B cell (primary cell): ENCODE measurements at regions of chr2 and their contacts with region 1.

Region 1: DNA sequence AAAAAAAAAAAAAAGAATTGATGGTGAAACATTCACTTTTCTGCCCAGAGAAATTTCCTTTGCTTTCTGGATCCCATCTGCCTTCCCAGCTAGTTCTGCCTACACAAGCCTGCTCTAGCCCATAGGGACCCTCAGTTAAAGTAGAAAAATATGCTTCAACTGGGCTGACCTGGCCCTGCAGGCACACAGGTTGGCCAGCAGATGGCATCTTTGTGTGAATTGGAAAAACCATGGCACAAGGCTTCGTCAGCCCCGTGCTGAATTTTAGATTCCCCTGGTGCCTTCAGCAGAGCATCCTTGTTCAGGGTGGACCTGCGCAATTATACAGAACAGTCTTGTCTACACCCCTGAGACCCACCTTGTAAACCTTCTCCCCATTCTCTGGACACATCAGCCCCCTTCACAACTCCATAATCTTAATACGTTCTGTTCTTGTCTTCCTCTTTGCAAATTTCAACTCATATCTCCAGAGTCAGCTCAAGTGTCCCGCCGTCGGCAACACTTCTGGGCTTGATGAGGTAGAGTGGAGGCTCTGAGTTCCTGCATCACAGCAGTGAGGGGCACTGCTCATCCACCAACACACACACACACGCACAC is 114.5 kb downstream of the INSIG2 start:
- DNase-seq: peak; percentile 66
- ATAC-seq: peak; percentile 87
- H3K4me3 ChIP-seq: no peak overlapping the region
- H3K4me3 Mint-ChIP-seq: no peak overlapping the region
- H3K27ac ChIP-seq: no peak overlapping the region
- H3K27ac Mint-ChIP-seq: no peak overlapping the region
- H3K4me1 ChIP-seq: peaks cover 0 to 5% of the 10 kb centered on the region in 2 donors
- H3K4me1 Mint-ChIP-seq: peaks cover 4% of the 10 kb centered on the region
- H3K27me3 ChIP-seq: peaks cover 0 to 15% (median 6%) of the 10 kb centered on the region in 4 experiments
- H3K27me3 Mint-ChIP-seq: peaks cover 47% of the 10 kb centered on the region
- CTCF ChIP-seq: peak; percentile 91

Region 2: DNA sequence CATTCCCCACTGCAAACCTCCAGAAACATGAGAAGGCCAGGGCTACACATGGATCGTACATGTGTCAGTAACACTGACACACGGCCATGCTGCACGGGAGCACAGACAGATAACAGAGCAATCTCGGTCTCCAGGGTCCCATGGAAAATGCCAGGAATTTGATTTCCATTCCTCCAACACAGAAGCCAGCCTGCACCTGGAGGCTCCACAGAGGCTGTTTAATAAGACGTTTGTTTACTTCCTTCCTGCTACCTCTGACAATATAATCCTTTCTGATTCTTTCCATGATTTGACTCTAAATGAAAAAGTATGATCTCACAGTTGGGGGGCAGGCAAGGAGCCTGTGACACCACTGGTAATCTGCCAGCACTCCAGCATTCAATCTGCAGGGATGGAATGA is 599.2 kb before region 1 on chr2:
- CTCF ChIA-PET with region 1: no interaction called
- POLR2A ChIA-PET with region 1: no interaction called
- intact Hi-C with region 1: no loop called
- DNase-seq: no peak
- ATAC-seq: no peak
- H3K4me3 ChIP-seq: no peak overlapping the region
- H3K4me3 Mint-ChIP-seq: no peak overlapping the region
- H3K27ac ChIP-seq: no peak overlapping the region
- H3K27ac Mint-ChIP-seq: no peak overlapping the region
- H3K4me1 ChIP-seq: no peaks in the 10 kb centered on the region
- H3K4me1 Mint-ChIP-seq: no peaks in the 10 kb centered on the region
- H3K27me3 ChIP-seq: no peaks in the 10 kb centered on the region
- H3K27me3 Mint-ChIP-seq: no peaks in the 10 kb centered on the region
- CTCF ChIP-seq: no peak

Region 3: DNA sequence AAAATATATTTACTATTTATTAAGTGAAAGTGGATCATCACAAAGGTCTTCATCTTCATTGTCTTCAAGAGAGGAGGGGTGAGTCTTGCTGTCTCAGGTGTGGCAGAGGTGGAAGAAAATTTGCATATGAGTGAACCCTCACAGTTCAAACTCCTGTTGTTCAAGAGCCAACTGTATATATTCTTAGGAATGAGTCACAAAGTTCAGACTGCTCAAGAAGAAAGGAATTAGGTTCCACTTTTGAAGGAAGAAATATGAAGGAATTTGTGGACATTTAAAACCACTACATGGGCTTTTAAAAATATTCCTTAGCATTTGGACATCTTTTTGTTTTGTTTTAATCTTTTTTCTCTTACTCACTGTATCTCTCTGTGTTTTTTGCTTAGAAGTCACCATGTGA is 98.0 kb after region 1 on chr2:
- CTCF ChIA-PET with region 1: no interaction called
- POLR2A ChIA-PET with region 1: no interaction called
- intact Hi-C with region 1: no loop called
- DNase-seq: no peak
- ATAC-seq: no peak
- H3K4me3 ChIP-seq: no peak overlapping the region
- H3K4me3 Mint-ChIP-seq: no peak overlapping the region
- H3K27ac ChIP-seq: no peak overlapping the region
- H3K27ac Mint-ChIP-seq: no peak overlapping the region
- H3K4me1 ChIP-seq: no peaks in the 10 kb centered on the region
- H3K4me1 Mint-ChIP-seq: no peaks in the 10 kb centered on the region
- H3K27me3 ChIP-seq: peaks cover 0 to 4% (median 0%) of the 10 kb centered on the region in 4 experiments
- H3K27me3 Mint-ChIP-seq: peaks cover 28% of the 10 kb centered on the region
- CTCF ChIP-seq: no peak

Region 4: DNA sequence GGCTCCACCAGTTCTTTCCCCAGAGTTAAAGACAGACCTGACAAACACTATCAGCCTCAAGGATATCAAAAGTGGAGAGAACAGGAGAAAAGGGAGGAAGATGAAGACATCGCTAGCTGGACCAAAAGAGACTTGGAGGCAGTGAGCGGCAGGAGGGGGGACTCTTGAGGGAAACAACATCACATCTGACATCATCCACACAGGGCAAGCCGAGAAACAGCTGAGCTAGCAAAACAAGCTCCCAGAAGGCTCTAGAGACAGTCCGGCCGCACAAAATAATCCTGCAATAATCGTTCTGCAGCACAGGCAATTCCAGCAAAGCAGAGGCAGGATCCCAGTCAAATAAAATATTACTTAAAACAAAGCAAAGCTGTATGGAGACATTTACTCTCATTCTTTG is 404.8 kb after region 1 on chr2:
- CTCF ChIA-PET with region 1: no interaction called
- POLR2A ChIA-PET with region 1: no interaction called
- intact Hi-C with region 1: no loop called
- DNase-seq: no peak
- ATAC-seq: no peak
- H3K4me3 ChIP-seq: no peak overlapping the region
- H3K4me3 Mint-ChIP-seq: no peak overlapping the region
- H3K27ac ChIP-seq: no peak overlapping the region
- H3K27ac Mint-ChIP-seq: no peak overlapping the region
- H3K4me1 ChIP-seq: no peaks in the 10 kb centered on the region
- H3K4me1 Mint-ChIP-seq: no peaks in the 10 kb centered on the region
- H3K27me3 ChIP-seq: no peaks in the 10 kb centered on the region
- H3K27me3 Mint-ChIP-seq: peaks cover 9% of the 10 kb centered on the region
- CTCF ChIP-seq: no peak

Region 5: DNA sequence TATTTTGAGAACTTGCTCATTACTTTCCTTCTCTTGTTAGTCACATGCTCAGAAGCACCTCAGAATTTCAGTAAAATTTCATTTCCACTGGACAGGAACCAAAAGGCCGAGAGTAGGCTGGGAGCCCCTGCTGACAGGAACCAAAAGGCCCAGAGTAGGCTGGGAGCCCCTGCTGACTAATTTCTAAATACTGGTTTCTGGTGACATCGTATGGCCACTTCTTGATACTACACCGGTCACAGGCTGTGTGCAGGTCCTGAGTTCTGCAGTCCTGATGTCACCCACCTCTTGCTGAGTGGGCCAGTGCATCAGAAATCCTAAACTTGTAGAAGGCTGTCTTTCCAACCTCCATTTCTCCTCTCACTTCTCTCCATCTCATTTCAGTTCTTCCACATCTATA is 662.3 kb after region 1 on chr2:
- CTCF ChIA-PET with region 1: interaction called, 3 read pairs
- POLR2A ChIA-PET with region 1: no interaction called
- intact Hi-C with region 1: loop called (anchors 1 kb)
- DNase-seq: peak; percentile 52
- ATAC-seq: peak; percentile 57
- H3K4me3 ChIP-seq: no peak overlapping the region
- H3K4me3 Mint-ChIP-seq: no peak overlapping the region
- H3K27ac ChIP-seq: no peak overlapping the region
- H3K27ac Mint-ChIP-seq: no peak overlapping the region
- H3K4me1 ChIP-seq: no peaks in the 10 kb centered on the region
- H3K4me1 Mint-ChIP-seq: no peaks in the 10 kb centered on the region
- H3K27me3 ChIP-seq: peaks cover 0 to 28% (median 20%) of the 10 kb centered on the region in 4 experiments
- H3K27me3 Mint-ChIP-seq: peaks cover 44% of the 10 kb centered on the region
- CTCF ChIP-seq: peak; percentile 47